ENCODE measurements at regions of chr2 and their contacts with region 1.

Region 1: GRCh38 chr2:24543252-24543651 is 52.2 kb downstream of the NCOA1 start:
- DNase-seq: peak; percentile 18
- ATAC-seq: no peak
- H3K4me3 Mint-ChIP-seq: no peak overlapping the region
- H3K27ac Mint-ChIP-seq: peak overlapping the region; percentile 9
- H3K4me1 Mint-ChIP-seq: peaks cover 23% of the 10 kb centered on the region
- H3K27me3 Mint-ChIP-seq: no peaks in the 10 kb centered on the region

Region 2: GRCh38 chr2:24421668-24422067 is 121.6 kb before region 1 on chr2:
- CTCF ChIA-PET with region 1: no interaction called
- POLR2A ChIA-PET with region 1: no interaction called
- intact Hi-C with region 1: loop called in 1 of 2 experiments (anchors 5 kb)
- DNase-seq: peak; percentile 80
- ATAC-seq: peak; percentile 81
- H3K4me3 Mint-ChIP-seq: no peak overlapping the region
- H3K27ac Mint-ChIP-seq: no peak overlapping the region
- H3K4me1 Mint-ChIP-seq: no peaks in the 10 kb centered on the region
- H3K27me3 Mint-ChIP-seq: no peaks in the 10 kb centered on the region